H1 (cell line): ENCODE measurements at regions of chr10 and their contacts with region 1.

Region 1: GRCh38 chr10:107011105-107011504 is 153.4 kb downstream of the SORCS1 start:
- DNase-seq: no peak
- H3K4me3 ChIP-seq: no peak overlapping the region
- H3K27ac ChIP-seq: no peak overlapping the region
- H3K4me1 ChIP-seq: peaks cover 0 to 6% (median 3%) of the 10 kb centered on the region in 4 experiments; a peak in 4 of 7 replicates
- H3K27me3 ChIP-seq: no peaks in the 10 kb centered on the region
- CTCF ChIP-seq: peak in 2 of 3 experiments; percentile 46 to 54; a peak in 2 of 4 replicates
- EP300 ChIP-seq: no peak
- POLR2A ChIP-seq: no peak
- RAD21 ChIP-seq: peak; percentile 70 to 76

Region 2: GRCh38 chr10:106705681-106706100 is 305.4 kb before region 1 on chr10:
- CTCF ChIA-PET with region 1: interaction called, 22 read pairs
- POLR2A ChIA-PET with region 1: no interaction called
- DNase-seq: peak; percentile 36 to 80
- H3K4me3 ChIP-seq: no peak overlapping the region
- H3K27ac ChIP-seq: no peak overlapping the region
- H3K4me1 ChIP-seq: peaks cover 8 to 10% (median 9%) of the 10 kb centered on the region in 4 experiments
- H3K27me3 ChIP-seq: no peaks in the 10 kb centered on the region
- CTCF ChIP-seq: peak; percentile 70 to 92 (median 82)
- EP300 ChIP-seq: no peak
- POLR2A ChIP-seq: no peak
- RAD21 ChIP-seq: peak; percentile 92 to 93

Region 3: DNA sequence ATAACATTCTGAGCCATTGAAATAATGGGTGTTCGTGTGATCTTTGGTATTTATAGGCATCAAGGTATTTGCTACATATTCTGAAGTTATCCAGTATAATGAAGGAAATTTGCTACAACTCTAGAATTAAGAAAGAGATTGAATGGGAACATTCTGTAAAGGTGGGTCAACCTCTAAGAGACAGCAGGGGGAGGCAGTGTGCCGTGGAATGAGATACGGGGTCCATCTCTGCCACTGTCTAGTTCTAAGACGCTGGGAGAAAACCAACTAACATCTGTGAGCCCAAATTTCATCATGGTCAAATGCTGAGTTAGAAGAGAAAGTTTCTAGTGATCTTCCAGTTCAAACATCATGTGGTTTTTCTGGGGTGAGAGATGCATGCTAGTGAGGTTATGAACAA is 215.5 kb before region 1 on chr10:
- CTCF ChIA-PET with region 1: interaction called, 19 read pairs
- POLR2A ChIA-PET with region 1: no interaction called
- DNase-seq: peak in 1 of 2 experiments; percentile 29
- H3K4me3 ChIP-seq: no peak overlapping the region
- H3K27ac ChIP-seq: no peak overlapping the region
- H3K4me1 ChIP-seq: no peaks in the 10 kb centered on the region; a peak in 1 of 7 replicates
- H3K27me3 ChIP-seq: no peaks in the 10 kb centered on the region
- CTCF ChIP-seq: peak; percentile 65 to 70 (median 68)
- EP300 ChIP-seq: no peak
- POLR2A ChIP-seq: no peak
- RAD21 ChIP-seq: peak; percentile 93 to 96

Region 4: GRCh38 chr10:106863549-106863948 is 147.6 kb before region 1 on chr10:
- CTCF ChIA-PET with region 1: interaction called, 15 read pairs
- POLR2A ChIA-PET with region 1: no interaction called
- DNase-seq: no peak
- H3K4me3 ChIP-seq: no peak overlapping the region
- H3K27ac ChIP-seq: no peak overlapping the region
- H3K4me1 ChIP-seq: no peaks in the 10 kb centered on the region; a peak in 1 of 7 replicates
- H3K27me3 ChIP-seq: no peaks in the 10 kb centered on the region
- CTCF ChIP-seq: peak in 2 of 3 experiments; percentile 61 to 69; a peak in 3 of 4 replicates
- EP300 ChIP-seq: no peak
- POLR2A ChIP-seq: no peak
- RAD21 ChIP-seq: peak; percentile 82 to 84